ENCODE measurements at regions of chr10 and their contacts with region 1.

Region 1: DNA sequence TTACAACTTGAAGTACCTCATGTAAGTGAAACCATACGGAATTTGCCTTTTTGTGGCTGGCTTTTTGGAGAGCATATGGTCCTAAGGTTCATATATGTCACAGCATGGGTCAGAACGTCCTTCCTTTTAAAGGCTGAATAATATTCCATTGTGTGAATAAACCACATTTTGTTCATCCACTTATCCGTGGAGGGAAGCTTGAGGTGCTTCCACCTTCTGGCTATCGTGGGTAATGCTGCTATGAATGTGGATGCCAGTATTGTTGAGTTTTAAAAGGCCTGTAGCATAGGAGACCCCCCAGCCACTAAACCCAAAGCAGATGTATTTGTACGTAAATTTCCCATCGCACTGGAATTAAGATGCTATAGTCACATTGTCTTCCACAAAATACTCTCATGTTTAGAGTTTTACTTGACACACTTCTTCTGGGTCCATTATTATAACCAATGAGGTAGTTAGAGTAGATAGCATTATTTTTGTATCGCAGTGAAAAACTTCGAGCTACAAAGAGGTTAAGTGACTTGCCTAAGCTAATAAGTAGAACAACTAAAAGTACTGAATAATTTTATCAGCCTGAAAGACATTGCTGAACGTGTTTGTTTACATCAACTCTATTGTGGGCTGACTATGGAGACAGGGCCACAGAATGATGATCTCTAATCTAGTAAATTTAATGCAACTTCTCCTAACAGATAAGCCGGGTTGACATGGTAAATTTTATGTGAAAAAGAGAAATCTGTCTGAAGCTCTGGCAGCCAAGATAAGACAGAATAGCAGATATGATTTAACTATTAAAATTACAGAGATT is 183.0 kb upstream of the CTBP2 start:
- DNase-seq: peak; percentile 44
- H3K4me3 ChIP-seq: no peak overlapping the region
- H3K27ac ChIP-seq: no peak overlapping the region
- H3K4me1 ChIP-seq: peaks cover 3% of the 10 kb centered on the region
- H3K27me3 ChIP-seq: no peaks in the 10 kb centered on the region
- CTCF ChIP-seq: peak; percentile 49

Region 2: GRCh38 chr10:125048101-125048864 is 295.0 kb before region 1 on chr10:
- intact Hi-C with region 1: loop called (anchors 10 kb)
- DNase-seq: peak; percentile 90
- H3K4me3 ChIP-seq: no peak overlapping the region
- H3K27ac ChIP-seq: no peak overlapping the region
- H3K4me1 ChIP-seq: peaks cover 5% of the 10 kb centered on the region
- H3K27me3 ChIP-seq: no peaks in the 10 kb centered on the region
- CTCF ChIP-seq: peak; percentile 97

Region 3: DNA sequence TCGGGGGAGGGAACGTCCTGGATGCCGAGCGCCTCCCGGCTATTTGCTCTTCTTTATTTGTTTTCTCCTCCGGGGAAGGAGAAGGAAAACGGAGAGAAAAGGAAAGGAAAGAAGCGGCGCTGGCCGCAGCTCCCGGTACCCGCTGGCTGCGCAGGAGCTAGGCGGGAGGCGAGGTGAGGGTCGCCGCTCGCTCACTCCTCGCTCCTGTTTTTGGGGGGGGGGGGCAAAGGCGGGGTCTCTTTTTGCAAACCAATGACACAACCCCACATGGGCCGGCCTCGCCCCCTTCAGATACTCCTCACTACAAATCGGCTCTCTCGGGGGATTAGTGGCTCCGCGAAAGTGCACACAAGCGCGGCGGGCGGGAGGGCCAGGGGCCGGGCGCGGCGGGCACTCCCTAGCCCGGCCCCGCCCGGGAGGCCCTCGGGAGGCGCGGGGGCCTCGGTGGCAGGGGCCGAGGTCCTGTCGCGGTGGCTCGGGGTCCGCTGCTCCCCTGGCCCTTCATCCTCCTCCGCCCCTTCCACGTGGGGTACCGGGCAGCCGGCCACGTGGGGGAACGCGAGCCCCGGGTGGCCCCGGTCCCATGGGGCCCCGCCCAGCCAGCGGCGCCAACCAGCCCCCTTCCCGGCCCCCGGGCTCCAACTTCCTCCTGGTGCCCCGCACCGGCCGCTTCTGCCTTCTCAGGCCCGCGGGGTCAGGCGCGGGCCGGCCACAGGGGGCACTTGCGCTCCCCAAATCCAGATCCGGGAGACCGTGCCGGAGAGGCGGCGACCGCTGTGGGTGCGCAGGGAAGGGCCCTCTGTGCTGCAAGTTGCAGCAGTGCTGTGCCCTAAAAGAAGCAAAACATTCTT is 182.2 kb before region 1 on chr10:
- intact Hi-C with region 1: loop called (anchors 10 kb)
- DNase-seq: peak; percentile 76
- H3K4me3 ChIP-seq: peak overlapping the region; percentile 69
- H3K27ac ChIP-seq: peak overlapping the region; percentile 93
- H3K4me1 ChIP-seq: no peaks in the 10 kb centered on the region
- H3K27me3 ChIP-seq: no peaks in the 10 kb centered on the region
- CTCF ChIP-seq: peak; percentile 33

Region 4: GRCh38 chr10:125209591-125210355 is 133.5 kb before region 1 on chr10:
- intact Hi-C with region 1: no loop called
- DNase-seq: no peak
- H3K4me3 ChIP-seq: no peak overlapping the region
- H3K27ac ChIP-seq: no peak overlapping the region
- H3K4me1 ChIP-seq: no peaks in the 10 kb centered on the region
- H3K27me3 ChIP-seq: no peaks in the 10 kb centered on the region
- CTCF ChIP-seq: no peak

Region 5: GRCh38 chr10:125811251-125811650 is 467.9 kb after region 1 on chr10:
- intact Hi-C with region 1: no loop called
- DNase-seq: no peak
- H3K4me3 ChIP-seq: no peak overlapping the region
- H3K27ac ChIP-seq: no peak overlapping the region
- H3K4me1 ChIP-seq: no peaks in the 10 kb centered on the region
- H3K27me3 ChIP-seq: no peaks in the 10 kb centered on the region
- CTCF ChIP-seq: no peak